Aorta (tissue), 5 donors: ENCODE measurements at regions of chr3 and their contacts with region 1.

Region 1: DNA sequence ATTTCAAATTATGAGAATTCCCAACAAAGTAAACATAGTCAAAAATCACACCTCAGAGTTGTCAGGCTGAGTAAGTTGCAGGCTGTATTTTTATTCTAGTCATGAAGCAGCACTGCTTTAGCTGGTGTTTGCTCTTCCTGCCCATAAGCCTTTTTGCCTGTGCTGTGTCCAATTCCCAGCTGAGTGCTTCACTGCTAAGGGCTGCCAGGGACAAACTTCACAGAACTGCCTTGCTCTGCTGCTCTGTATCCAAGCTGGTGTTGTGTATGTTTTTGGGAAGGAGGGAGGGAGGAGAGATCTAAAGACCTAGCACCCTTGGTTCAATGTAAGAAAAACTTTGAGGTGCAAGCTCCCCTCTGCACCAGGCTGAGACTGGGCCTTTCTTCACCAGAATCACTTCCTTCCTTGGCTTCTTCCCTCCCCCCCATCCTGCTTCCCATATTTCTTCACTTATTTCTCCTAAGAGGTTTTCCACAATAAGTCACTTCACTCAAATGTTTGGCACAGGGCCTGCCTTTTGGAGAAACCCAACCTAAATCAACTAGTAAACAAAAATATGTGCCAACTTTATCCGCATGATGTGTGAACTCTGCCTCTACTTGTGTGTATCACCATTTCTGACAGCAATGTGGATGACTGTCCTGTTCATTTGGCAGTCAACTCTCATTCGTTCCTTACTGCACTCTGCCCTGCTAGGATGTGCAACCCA is 156.1 kb downstream of the TBL1XR1 start:
- DNase-seq: no peak
- ATAC-seq: peak; percentile 73
- H3K4me3 ChIP-seq: no peak overlapping the region
- H3K27ac ChIP-seq: peak overlapping the region; percentile 30 to 67
- H3K4me1 ChIP-seq: peaks cover 0 to 5% of the 10 kb centered on the region in 2 donors
- H3K27me3 ChIP-seq: no peaks in the 10 kb centered on the region

Region 2: GRCh38 chr3:178048768-178049167 is 1007.6 kb after region 1 on chr3:
- intact Hi-C with region 1: loop called in 1 of 2 experiments (anchors 10 kb)
- DNase-seq: no peak
- ATAC-seq: no peak
- H3K4me3 ChIP-seq: no peak overlapping the region
- H3K27ac ChIP-seq: no peak overlapping the region
- H3K4me1 ChIP-seq: no peaks in the 10 kb centered on the region
- H3K27me3 ChIP-seq: no peaks in the 10 kb centered on the region

Region 3: GRCh38 chr3:178325330-178325729 is 1284.2 kb after region 1 on chr3:
- intact Hi-C with region 1: loop called in 1 of 2 experiments (anchors 5 kb)
- DNase-seq: no peak
- ATAC-seq: no peak
- H3K4me3 ChIP-seq: no peak overlapping the region
- H3K27ac ChIP-seq: no peak overlapping the region
- H3K4me1 ChIP-seq: peaks cover 0 to 7% of the 10 kb centered on the region in 2 donors
- H3K27me3 ChIP-seq: no peaks in the 10 kb centered on the region